Esophagus squamous epithelium (tissue), 5 donors: ENCODE measurements at regions of chr9 and their contacts with region 1.

Region 1: DNA sequence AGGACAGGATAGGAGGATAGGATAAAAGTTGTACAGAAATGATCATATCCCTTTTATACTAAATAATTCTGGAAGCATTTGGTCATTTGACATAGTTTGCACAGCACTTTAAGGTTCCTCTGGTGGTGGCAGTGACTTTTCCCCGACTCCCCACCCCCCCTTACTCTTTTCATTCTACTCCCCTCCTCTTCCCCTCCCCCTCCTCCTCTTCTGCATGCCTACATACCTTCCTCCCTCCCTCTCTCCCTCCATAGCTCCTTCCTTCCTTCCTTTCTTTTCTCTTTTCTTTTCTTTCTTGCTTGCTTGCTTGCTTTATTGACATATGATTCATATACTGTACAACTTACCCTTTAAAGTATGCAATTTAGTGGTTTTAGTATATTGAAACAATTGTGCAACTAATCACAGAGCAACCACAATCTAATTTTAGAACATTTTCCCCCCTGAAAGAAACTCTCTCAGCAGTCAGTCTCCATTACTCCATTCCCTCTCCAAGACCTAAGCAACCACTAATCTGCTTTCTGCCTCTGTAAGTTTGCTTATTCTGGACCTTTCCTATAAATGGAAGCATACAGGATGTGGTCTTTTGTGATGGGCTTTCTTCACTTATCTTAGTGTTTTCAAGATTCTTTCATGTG is 159.0 kb downstream of the HACD4 start:
- DNase-seq: no peak
- H3K4me3 ChIP-seq: no peak overlapping the region
- H3K27ac ChIP-seq: no peak overlapping the region
- H3K4me1 ChIP-seq: no peaks in the 10 kb centered on the region
- H3K27me3 ChIP-seq: no peaks in the 10 kb centered on the region
- CTCF ChIP-seq: no peak
- POLR2A ChIP-seq: no peak

Region 2: GRCh38 chr9:21110708-21111576 is 238.5 kb after region 1 on chr9:
- intact Hi-C with region 1: loop called (anchors 10 kb)
- DNase-seq: no peak
- H3K4me3 ChIP-seq: no peak overlapping the region
- H3K27ac ChIP-seq: no peak overlapping the region
- H3K4me1 ChIP-seq: no peaks in the 10 kb centered on the region
- H3K27me3 ChIP-seq: no peaks in the 10 kb centered on the region
- CTCF ChIP-seq: peak; percentile 45 to 86 (median 76)
- POLR2A ChIP-seq: no peak